ENCODE measurements at regions of chr1 and their contacts with region 1.

Region 1: DNA sequence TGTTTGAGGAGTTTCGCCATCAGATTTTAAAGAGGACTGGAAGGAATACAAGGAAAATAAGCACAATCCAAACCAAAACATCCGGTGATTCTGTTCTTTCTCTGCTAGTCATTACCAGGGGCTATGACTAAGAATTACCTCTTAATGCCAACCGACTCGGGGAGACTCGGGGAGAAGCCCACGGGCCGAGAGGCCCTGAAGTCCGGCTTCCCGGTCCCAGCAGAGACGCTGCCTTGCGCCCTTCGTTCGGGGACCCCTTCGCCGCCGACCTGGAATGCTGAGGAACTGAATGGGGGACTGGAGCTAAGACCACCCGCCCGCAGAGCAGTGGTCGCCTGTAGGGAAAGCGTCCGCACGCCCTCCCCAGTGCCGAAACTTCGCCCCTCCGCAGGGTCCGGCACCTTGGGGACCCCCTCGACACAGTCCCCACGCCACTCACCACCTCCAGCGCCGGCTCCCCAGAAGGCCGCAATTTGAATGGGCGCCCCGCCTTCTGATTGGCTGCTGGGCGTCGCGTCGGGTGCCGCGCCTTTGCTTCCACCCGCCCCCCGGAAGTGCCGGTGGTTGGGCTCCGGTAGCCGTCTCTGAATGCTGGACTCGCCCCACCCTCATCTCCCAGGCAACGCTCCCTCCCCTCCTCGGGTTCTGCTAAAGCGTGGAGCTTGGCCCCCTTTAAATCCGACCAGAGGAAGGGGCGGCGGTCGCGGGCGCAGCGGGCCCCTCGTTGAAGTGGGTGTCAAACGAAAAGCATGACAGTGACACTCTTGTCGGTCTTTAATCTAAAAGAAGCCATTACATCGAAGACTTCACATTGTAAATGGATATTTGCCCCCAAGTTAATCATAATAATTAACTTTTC is at the start of gene KIF14:
- DNase-seq: peak; percentile 94 to 96 (median 96)
- ATAC-seq: peak; percentile 99 to 100 (median 100)
- H3K4me3 ChIP-seq: peak within 1 kb of the TSS; percentile 50 to 69 (median 55)
- H3K27ac ChIP-seq: peak within 1 kb of the TSS; percentile 23 to 64 (median 39)
- H3K4me1 ChIP-seq: no peaks in the 10 kb centered on the region
- H3K27me3 ChIP-seq: no peaks in the 10 kb centered on the region
- CTCF ChIP-seq: no peak
- POLR2A ChIP-seq: no peak
- total RNA-seq, gene KIF14: 0.15 to 0.49 (median 0.38) TPM

Region 2: DNA sequence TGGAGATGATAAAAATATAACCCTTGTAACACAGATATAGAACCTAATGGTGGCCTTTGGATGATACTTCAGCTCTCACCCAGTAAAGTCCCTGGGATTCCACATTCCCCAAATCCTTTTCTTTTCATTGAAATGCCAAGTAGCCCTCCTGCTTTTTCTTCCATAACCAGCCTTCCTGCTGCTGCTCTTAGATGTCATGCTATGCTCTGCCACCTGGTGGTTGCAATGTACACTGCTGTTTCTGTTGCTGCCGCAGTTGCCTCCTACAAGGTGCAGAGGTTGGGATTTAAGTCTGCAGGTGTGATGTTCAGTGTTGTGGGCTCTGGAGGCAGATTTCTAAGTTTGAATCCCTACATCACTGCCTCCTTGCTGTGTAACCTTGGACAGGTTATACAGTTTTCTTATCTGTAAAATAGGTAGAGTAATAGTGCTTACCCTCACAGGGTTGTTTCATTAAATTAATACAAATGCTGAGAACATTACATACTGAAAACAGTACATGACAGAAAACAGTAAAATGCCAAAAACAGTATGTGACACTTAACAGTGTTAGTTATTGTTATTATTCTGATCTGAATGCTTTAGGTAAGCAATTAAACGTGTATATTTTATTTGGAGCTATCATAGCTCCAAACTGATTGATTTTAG is 182.5 kb after region 1 on chr1:
- intact Hi-C with region 1: loop called in 1 of 2 experiments (anchors 10 kb)
- DNase-seq: peak; percentile 62 to 78 (median 62)
- ATAC-seq: peak; percentile 98 to 100 (median 98)
- H3K4me3 ChIP-seq: no peak overlapping the region
- H3K27ac ChIP-seq: no peak overlapping the region
- H3K4me1 ChIP-seq: no peaks in the 10 kb centered on the region
- H3K27me3 ChIP-seq: no peaks in the 10 kb centered on the region
- CTCF ChIP-seq: peak; percentile 86 to 94 (median 90)
- POLR2A ChIP-seq: no peak